PC-3 (cell line): ENCODE measurements at regions of chr9 and their contacts with region 1.

Region 1: DNA sequence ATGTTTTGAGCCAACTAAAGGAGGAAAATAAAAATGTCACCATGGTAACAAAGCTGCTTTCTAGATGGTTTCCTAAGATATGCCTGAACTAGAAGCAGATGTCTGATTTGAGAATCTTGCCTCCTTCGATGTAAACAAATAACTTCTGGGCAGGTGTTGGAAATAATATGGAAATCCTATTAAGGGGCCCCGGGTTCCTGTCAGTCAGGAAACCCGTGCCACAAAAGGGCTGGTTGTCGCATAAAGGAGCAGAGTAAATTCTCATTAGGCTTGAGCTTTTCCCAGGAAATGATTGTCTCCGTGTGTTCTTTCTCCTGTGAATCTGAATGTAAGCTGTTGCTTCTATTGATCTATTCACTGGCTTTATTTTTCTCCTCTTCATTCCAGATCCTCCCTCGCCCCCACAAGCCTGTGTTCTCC is 90.8 kb downstream of the TLE4 start:
- DNase-seq: no peak
- ATAC-seq: no peak
- H3K4me3 ChIP-seq: no peak overlapping the region
- H3K27ac ChIP-seq: no peak overlapping the region
- H3K4me1 ChIP-seq: peaks cover 16% of the 10 kb centered on the region
- H3K27me3 ChIP-seq: no peaks in the 10 kb centered on the region
- CTCF ChIP-seq: no peak

Region 2: GRCh38 chr9:79632060-79632459 is 30.5 kb before region 1 on chr9:
- CTCF ChIA-PET with region 1: no interaction called
- POLR2A ChIA-PET with region 1: interaction called, 17 read pairs
- intact Hi-C with region 1: no loop called
- DNase-seq: no peak
- ATAC-seq: no peak
- H3K4me3 ChIP-seq: no peak overlapping the region
- H3K27ac ChIP-seq: no peak overlapping the region
- H3K4me1 ChIP-seq: no peaks in the 10 kb centered on the region
- H3K27me3 ChIP-seq: no peaks in the 10 kb centered on the region
- CTCF ChIP-seq: no peak

Region 3: GRCh38 chr9:79686381-79687130 is 24.0 kb after region 1 on chr9:
- CTCF ChIA-PET with region 1: no interaction called
- POLR2A ChIA-PET with region 1: no interaction called
- intact Hi-C with region 1: no loop called
- DNase-seq: peak; percentile 35
- ATAC-seq: no peak
- H3K4me3 ChIP-seq: no peak overlapping the region
- H3K27ac ChIP-seq: no peak overlapping the region
- H3K4me1 ChIP-seq: no peaks in the 10 kb centered on the region; the same call in 1 of the 2 replicates
- H3K27me3 ChIP-seq: no peaks in the 10 kb centered on the region
- CTCF ChIP-seq: no peak

Region 4: DNA sequence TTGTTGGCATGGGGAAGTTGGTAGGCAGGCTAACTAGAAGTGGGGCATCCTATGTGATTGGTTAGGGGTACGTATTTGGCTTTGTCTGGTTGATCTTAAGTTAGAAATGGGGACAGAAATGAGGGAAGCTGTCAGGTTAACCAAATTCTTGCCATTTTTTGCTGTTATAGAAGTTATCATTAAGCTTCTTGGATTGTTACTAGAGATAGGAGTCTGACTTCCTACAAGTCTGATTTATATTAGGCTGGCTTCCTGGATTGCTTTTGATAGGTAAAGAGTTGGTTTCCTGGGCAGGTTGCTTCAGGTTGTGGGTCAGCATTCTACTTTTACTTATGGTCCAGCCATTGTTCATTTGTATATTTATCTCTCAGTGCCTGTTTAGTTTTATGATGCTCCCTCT is 126.1 kb after region 1 on chr9:
- CTCF ChIA-PET with region 1: no interaction called
- POLR2A ChIA-PET with region 1: no interaction called
- intact Hi-C with region 1: no loop called
- DNase-seq: no peak
- ATAC-seq: no peak
- H3K4me3 ChIP-seq: no peak overlapping the region
- H3K27ac ChIP-seq: no peak overlapping the region
- H3K4me1 ChIP-seq: no peaks in the 10 kb centered on the region
- H3K27me3 ChIP-seq: no peaks in the 10 kb centered on the region
- CTCF ChIP-seq: no peak